ENCODE measurements at regions of chr9 and their contacts with region 1.

Region 1: DNA sequence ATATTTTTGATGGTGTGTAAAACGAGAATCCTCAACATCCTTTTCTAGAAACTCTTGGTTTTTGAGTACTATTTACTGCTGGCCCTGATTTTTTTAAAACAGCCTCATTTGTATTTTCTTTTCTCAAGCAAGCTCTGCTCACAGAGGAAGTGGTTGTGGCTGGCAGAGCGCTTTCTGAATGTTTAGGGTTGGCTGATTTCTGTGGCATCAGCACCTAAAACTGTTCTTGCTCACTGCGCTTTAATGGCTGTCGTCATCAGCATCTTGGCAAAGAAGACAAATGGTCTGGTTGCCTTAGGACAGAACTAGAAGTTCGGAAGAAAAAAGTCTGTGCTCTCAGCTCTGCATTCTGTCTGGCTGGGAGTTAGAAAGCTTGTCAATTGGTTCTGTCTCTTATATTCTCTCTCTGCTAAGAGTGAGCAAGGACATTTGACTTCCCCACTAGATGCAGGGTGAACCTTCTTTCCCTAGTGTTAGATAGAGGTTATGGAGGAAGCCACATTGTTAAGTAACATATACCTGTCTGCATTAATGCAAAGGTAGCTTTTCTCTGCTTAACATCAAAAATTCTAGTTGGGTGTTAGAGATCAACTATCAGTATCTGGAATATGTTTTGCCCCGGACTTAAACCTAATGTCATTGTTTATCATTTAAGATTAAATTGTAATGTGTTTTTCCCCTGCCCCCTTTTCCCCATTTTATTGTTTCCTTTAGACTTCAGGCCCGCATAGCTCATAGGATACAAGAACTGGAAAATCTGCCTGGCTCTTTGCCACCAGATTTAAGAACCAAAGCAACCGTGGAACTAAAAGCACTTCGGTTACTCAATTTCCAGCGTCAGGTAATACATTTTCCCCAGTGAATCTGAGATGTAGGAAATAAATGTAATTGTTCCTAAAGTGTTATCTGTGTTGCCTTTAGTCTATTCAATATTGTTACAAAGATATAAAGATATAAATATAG is 39.0 kb downstream of the SMARCA2 start:
- DNase-seq: peak; percentile 52
- H3K4me3 ChIP-seq: no peak overlapping the region
- H3K27ac ChIP-seq: peak overlapping the region; percentile 39 to 71 (median 52)
- H3K4me1 ChIP-seq: peaks cover 0 to 19% (median 2%) of the 10 kb centered on the region in 4 donors
- H3K27me3 ChIP-seq: no peaks in the 10 kb centered on the region
- CTCF ChIP-seq: no peak
- EP300 ChIP-seq: no peak
- POLR2A ChIP-seq: no peak

Region 2: DNA sequence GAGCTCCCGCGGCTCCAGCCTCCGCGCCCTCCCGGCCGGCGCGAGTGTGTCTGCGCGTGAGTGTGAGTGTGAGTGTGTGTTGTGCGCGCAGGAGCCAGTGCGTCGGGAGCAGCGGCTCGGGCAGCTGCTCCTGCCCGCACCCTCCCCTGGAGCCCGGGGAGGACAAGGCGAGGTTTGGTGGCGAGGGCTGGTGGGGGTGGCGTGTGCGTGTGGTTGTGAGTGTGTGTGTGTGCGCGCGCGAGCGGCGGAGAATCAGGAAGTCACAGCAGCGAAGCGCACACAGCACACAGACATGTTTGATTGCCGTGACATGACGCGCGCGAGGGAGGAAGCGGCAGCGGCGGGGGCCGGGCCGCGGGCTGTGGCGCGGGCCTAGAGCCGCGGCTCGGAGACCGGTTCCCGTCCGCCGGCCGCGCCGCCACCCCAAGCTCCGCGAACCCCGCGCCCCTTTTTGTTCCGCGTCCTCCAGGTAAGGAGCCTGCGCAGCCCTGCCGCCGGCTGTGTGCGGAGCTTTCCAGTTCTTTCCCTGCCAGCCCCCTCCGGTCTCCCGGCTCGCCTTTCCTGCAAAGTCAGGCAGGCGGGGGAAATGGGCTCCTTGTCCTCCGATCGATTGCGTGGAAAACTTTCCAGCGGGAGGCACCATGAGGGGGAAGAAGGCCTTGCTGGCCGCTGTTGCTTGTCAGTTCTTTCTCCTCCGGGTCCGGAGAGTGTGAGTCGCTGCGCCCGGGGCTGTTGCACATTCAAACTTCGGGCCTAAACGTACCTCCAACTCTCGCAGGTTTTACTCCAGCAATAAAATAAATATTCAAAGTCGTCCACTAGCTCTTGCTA is 36.6 kb before region 1 on chr9:
- in situ Hi-C with region 1: no loop called
- intact Hi-C with region 1: loop called (anchors 1 kb)
- DNase-seq: peak; percentile 81
- H3K4me3 ChIP-seq: peak overlapping the region; percentile 49 to 89 (median 83)
- H3K27ac ChIP-seq: peak overlapping the region; percentile 95 to 99 (median 96)
- H3K4me1 ChIP-seq: peaks cover 5 to 52% (median 35%) of the 10 kb centered on the region in 4 donors
- H3K27me3 ChIP-seq: no peaks in the 10 kb centered on the region
- CTCF ChIP-seq: no peak
- EP300 ChIP-seq: no peak
- POLR2A ChIP-seq: peak; percentile 82

Measured in transverse colon (tissue), 4 donors.